Activated CD8-positive, alpha-beta memory T cell treated with anti-CD3 and anti-CD28 coated beads, Interleukin-2, amount 10 ng/mL, durations not matched to agents 7 days and 5 days (primary cell): ENCODE measurements at regions of chr11 and their contacts with region 1.

Region 1: GRCh38 chr11:117107701-117108590 is 9.7 kb upstream of the SIK3 start:
- DNase-seq: no peak
- ATAC-seq: no peak
- H3K4me3 Mint-ChIP-seq: no peak overlapping the region
- H3K27ac Mint-ChIP-seq: no peak overlapping the region
- H3K4me1 Mint-ChIP-seq: peaks cover 6% of the 10 kb centered on the region
- H3K27me3 Mint-ChIP-seq: peaks cover 3% of the 10 kb centered on the region

Region 2: DNA sequence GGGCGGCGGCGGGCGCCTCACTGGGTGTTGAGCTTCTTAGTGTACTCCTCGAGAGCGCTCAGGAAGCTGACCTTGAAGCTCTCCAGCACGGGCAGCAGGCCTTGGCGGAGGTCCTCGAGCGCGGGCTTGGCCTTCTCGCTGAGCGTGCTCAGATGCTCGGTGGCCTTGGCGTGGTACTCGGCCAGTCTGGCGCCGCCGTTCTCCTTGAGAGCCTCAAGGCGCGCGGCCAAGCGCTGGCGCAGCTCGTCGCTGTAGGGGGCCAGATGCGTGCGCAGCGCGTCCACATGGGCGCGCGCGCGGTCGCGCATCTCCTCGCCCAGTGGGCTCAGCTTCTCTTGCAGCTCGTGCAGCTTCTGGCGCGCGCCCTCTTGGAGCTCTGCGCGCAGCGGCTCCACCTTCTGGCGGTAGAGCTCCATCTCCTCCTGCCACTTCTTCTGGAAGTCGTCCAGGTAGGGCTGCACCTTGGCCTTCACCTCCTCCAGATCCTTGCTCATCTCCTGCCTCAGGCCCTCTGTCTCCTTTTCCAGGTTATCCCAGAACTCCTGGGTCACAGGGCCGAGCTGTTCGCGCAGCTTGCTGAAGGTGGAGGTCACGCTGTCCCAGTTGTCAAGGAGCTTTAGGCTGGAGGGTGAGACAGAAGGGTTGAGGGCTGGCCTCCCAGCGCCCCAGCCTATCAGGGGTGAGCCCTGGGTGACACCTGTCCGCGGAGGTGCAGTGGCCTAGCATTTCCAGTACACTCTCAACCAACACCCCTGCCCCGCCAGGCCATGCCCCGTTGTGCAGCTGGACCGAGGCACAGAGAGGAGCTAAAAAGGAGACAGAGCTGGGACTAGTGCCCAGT is 271.9 kb before region 1 on chr11:
- CTCF ChIA-PET with region 1: interaction called, 19 read pairs
- DNase-seq: peak; percentile 92
- ATAC-seq: peak; percentile 96
- H3K4me3 Mint-ChIP-seq: peak overlapping the region; percentile 71
- H3K27ac Mint-ChIP-seq: peak overlapping the region; percentile 61
- H3K4me1 Mint-ChIP-seq: peaks cover 12% of the 10 kb centered on the region
- H3K27me3 Mint-ChIP-seq: no peaks in the 10 kb centered on the region

Region 3: DNA sequence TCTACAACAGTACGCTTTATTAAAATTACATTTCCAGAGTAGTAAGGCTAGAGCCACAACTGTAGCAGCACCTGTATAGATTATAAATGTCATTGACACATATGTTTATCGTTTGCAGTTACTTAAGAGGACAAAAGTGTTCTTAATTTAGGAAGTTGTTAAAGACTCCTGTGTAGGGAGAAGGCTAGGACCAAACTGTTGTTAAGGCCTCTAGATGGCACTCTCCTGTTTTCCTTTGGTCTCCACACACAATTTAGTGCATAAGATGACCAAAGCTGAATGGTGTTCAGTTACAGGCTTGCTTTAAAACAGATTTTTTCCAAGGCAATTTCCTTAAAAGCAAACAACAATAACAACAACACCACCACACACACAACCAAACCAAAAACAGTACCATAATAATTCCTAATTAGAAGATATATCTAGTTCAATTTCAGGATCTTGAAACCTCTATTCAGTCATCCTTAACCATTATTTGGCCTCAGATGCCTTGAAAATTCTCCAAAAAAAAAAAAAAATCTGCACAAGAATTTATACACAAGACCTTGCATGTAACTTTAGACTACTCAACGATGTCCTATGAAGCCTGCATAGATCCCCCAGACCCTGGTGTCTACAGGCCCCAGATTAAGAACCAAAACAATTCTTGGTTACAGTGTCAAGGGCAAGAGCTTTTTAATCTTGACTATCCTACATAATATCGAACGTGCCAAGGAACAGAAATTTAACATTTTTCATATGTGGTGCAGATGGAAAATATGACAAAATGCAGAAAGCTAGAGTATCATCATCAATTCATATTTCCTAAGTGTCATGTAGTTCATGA is 227.9 kb before region 1 on chr11:
- CTCF ChIA-PET with region 1: interaction called, 49 read pairs
- DNase-seq: no peak
- ATAC-seq: peak; percentile 86
- H3K4me3 Mint-ChIP-seq: no peak overlapping the region
- H3K27ac Mint-ChIP-seq: no peak overlapping the region
- H3K4me1 Mint-ChIP-seq: peaks cover 9% of the 10 kb centered on the region
- H3K27me3 Mint-ChIP-seq: no peaks in the 10 kb centered on the region

Region 4: GRCh38 chr11:116918925-116919655 is 188.9 kb before region 1 on chr11:
- CTCF ChIA-PET with region 1: no interaction called
- DNase-seq: no peak
- ATAC-seq: no peak
- H3K4me3 Mint-ChIP-seq: no peak overlapping the region
- H3K27ac Mint-ChIP-seq: no peak overlapping the region
- H3K4me1 Mint-ChIP-seq: peaks cover 6% of the 10 kb centered on the region
- H3K27me3 Mint-ChIP-seq: no peaks in the 10 kb centered on the region

Region 5: DNA sequence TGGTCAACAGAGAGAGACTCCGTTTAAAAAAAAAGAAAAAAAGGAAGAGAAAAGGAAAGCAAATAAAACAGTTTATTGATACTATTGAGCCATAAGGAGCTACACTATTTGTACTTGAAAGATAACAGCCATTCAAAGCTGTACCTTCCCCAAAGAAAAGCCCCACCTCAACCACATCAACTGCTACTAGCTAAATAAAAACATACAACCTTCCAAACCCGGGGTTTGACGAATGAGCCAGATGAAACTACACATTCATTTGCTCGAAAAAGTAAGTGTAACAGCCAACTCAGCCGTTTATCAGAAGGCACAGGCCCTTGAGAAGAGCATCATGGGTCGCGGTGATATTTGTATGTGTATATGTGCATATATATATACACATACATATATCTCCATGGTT is 88.1 kb before region 1 on chr11:
- CTCF ChIA-PET with region 1: interaction called, 12 read pairs
- DNase-seq: no peak
- ATAC-seq: no peak
- H3K4me3 Mint-ChIP-seq: peak overlapping the region; percentile 8
- H3K27ac Mint-ChIP-seq: peak overlapping the region; percentile 3
- H3K4me1 Mint-ChIP-seq: peaks cover 59% of the 10 kb centered on the region
- H3K27me3 Mint-ChIP-seq: no peaks in the 10 kb centered on the region

Region 6: DNA sequence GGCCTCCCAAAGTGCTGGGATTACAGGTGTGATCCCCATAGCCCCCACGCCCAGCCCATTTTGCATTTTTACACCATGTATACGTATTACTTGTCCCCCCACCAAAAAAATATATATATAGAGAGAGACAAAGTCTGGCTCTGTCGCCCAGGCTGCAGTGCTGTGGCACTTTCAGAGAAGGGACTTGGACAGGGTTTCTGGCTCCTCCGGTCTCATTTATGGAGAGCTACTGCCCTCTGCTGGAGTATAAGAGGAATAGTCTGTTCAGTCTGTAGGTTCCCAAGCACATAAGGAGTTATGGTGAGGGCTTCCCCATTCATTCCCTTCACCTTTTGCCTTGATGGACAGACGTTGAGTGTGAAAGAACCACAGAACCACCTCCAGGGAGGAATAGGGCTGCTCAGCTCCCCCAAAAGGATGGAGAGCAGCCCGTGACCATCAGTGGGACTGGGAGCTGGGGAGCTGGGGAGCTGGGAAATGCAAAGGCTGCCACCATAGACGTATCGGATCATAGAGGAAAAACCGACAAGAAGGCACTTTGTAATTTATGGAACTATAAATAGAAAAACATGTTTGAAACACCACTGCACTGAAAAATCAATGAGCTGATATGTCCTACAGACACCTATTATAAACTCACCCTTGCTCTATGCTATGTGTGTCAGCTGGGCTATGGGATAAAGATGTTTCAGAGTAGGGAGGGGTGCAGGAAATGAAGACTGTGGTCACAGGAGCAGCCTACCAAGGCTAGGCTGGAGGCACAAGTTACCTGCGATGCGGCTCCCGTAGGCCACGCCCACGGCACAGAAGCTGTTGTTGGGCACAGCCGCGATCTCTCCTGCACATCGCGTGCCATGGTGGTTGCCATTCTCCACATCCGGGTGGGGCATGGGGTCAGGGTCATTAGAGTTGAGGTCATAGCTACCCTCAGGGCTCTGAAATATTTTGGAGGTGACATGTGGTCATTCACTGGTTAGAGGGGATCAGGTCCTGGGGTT is 118.7 kb after region 1 on chr11:
- CTCF ChIA-PET with region 1: interaction called, 15 read pairs
- DNase-seq: peak; percentile 56
- ATAC-seq: peak; percentile 54
- H3K4me3 Mint-ChIP-seq: no peak overlapping the region
- H3K27ac Mint-ChIP-seq: peak overlapping the region; percentile 7
- H3K4me1 Mint-ChIP-seq: peaks cover 31% of the 10 kb centered on the region
- H3K27me3 Mint-ChIP-seq: no peaks in the 10 kb centered on the region